ENCODE measurements at regions of chr15 and their contacts with region 1.

Region 1: DNA sequence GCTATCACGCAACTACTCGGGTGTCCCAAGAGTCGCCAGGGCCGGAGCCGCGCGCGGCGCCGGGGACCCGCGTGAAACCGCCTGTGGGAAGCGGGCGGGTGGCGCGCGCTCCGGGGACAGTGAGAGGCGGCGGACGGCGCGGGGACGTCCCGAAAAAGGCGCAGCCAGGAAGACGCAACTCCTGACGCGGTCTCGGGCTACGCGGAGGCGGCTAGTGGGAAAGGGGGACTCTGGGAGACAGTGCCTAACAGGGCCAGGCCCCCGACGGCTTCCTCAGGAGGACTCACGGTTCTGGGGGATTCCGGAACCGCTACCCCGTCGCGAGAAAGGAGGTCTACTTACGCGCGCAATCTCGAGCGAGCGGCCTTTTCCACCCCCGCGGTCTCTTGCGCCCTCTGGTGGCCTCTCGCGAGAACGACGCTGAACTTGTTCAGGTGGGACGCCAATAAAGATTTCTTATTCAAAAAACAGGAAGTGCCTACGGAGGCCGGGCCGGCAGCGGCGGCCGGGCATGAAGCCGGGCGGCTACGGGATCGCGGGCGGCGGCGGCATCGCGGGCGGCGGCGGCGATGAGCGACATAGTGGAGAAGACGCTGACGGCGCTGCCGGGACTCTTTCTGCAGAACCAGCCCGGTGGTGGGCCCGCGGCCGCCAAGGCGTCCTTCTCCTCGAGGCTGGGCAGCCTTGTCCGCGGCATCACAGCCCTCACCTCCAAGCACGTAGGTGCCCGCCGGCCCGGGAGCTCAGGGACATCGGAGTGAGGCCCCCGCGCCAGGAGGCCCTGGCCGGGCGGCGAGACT is at the start of gene AP4E1:
- DNase-seq: peak; percentile 95
- H3K4me3 Mint-ChIP-seq: peak within 1 kb of the TSS; percentile 96
- H3K27ac Mint-ChIP-seq: peak within 1 kb of the TSS; percentile 98
- H3K4me1 Mint-ChIP-seq: peaks cover 28% of the 10 kb centered on the region
- H3K27me3 Mint-ChIP-seq: no peaks in the 10 kb centered on the region
- total RNA-seq, gene AP4E1: 13.3 to 14.5 TPM

Region 2: DNA sequence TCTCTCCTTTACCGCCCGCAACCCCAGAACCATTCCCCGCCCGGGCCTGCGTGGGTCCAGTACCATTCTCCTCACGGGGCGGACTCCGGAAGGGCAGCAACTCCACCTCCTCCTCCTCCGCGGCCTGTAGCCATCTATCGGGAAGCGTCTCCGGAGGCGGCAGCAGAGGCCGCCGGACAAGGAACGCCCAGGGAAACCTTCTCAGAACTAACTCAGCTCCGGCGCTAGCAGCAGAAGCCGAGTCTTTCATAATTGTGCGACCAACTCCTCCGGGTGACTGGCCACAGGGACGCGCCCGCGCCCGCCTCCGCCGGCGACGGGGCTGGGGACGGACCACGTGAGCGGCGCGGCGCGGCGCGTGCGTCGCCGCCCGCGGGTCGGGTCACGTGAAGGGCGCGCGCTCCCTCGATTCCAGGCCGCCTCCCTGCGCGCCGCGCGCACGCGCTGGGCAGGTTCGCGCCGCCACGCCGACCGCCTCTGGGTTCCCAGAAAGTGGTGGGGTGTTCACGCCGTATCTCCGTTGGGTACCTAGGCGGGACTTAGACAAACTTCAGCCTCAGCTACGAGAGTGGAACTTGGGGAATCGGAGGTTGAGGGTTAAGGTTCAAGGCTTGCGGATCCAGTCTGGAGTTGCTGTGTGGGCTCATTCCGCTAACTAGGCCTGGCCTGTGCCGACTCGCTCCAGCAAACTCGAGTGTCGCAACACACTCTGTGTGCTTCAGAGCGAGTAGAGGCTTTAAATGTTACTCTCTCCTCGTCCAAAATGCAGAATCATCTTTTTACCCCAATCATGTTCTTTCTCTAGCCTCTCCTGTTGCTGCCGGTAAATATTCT is 221.7 kb before region 1 on chr15 and contains the start of gene TRPM7:
- CTCF ChIA-PET with region 1: no interaction called
- POLR2A ChIA-PET with region 1: interaction called, 14 read pairs
- DNase-seq: peak; percentile 90
- H3K4me3 Mint-ChIP-seq: peak within 1 kb of the TSS; percentile 99
- H3K27ac Mint-ChIP-seq: peak within 1 kb of the TSS; percentile 97
- H3K4me1 Mint-ChIP-seq: peaks cover 57% of the 10 kb centered on the region
- H3K27me3 Mint-ChIP-seq: no peaks in the 10 kb centered on the region
- total RNA-seq, gene TRPM7: 35.3 to 40.2 TPM

Region 3: DNA sequence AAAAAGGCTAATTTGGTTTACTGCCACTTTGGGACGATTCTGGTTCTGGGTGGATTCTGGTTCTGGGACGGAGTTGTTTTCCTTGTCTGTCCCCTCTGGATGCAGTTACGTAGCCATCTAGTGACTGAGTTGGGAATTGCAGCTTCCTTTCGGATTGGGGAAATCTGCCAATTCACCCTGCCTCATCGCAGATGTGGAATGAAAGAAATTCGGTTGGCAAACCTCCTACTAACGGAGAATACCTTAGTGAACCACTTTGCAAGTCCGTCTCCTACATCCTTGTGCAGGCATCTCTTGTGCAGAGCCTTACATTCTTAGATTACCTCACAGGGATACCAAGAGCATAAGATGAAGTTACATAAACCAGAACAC is 31.4 kb before region 1 on chr15:
- CTCF ChIA-PET with region 1: interaction called, 13 read pairs
- POLR2A ChIA-PET with region 1: interaction called, 24 read pairs
- DNase-seq: peak; percentile 71
- H3K4me3 Mint-ChIP-seq: peak overlapping the region; percentile 58
- H3K27ac Mint-ChIP-seq: peak overlapping the region; percentile 52
- H3K4me1 Mint-ChIP-seq: peaks cover 50% of the 10 kb centered on the region
- H3K27me3 Mint-ChIP-seq: peaks cover 10% of the 10 kb centered on the region

Region 4: GRCh38 chr15:50883903-50884302 is 24.5 kb before region 1 on chr15:
- CTCF ChIA-PET with region 1: interaction called, 13 read pairs
- POLR2A ChIA-PET with region 1: interaction called, 32 read pairs
- DNase-seq: peak; percentile 52
- H3K4me3 Mint-ChIP-seq: no peak overlapping the region
- H3K27ac Mint-ChIP-seq: peak overlapping the region; percentile 91
- H3K4me1 Mint-ChIP-seq: peaks cover 72% of the 10 kb centered on the region
- H3K27me3 Mint-ChIP-seq: no peaks in the 10 kb centered on the region

Region 5: DNA sequence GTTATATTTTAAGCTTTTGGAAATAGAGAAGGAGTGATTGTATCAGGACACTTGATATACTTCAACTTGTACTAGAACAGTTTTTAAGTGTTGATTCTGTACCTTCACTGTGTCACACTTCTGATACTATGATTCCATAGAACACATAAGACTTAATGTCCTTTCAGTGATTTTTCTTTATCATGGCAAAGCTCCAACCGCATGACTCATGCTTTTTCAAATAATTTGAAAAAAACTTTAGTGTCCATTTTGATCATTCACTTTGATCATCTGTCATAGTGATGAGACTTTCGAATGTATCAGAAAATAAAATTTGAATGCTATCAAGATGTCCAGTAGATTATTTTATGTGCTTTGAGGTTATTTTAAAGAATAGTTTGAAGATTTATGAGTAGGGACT is 32.1 kb after region 1 on chr15:
- CTCF ChIA-PET with region 1: no interaction called
- POLR2A ChIA-PET with region 1: no interaction called
- DNase-seq: no peak
- H3K4me3 Mint-ChIP-seq: no peak overlapping the region
- H3K27ac Mint-ChIP-seq: no peak overlapping the region
- H3K4me1 Mint-ChIP-seq: no peaks in the 10 kb centered on the region
- H3K27me3 Mint-ChIP-seq: no peaks in the 10 kb centered on the region

Region 6: DNA sequence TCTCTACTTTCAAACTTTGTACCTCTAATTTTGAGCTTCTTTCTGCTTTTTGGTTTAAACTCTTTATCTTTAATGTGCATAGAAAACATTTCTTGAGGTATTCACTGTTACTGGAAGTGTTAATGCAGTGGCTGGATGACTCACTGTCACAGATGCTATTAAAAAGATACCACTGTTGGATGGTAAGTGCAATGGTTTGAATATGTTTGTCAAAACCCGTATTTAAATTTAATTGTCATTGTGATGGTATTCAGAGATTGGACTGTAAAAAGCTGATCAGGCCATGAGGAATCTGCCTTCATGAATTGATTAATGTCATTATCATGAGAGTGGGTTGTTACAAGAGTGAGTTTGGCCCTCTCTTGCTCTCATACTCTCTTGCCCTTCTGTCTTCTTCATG is 70.6 kb after region 1 on chr15:
- CTCF ChIA-PET with region 1: no interaction called
- POLR2A ChIA-PET with region 1: no interaction called
- DNase-seq: no peak
- H3K4me3 Mint-ChIP-seq: no peak overlapping the region
- H3K27ac Mint-ChIP-seq: no peak overlapping the region
- H3K4me1 Mint-ChIP-seq: peaks cover 5% of the 10 kb centered on the region
- H3K27me3 Mint-ChIP-seq: no peaks in the 10 kb centered on the region

Region 7: DNA sequence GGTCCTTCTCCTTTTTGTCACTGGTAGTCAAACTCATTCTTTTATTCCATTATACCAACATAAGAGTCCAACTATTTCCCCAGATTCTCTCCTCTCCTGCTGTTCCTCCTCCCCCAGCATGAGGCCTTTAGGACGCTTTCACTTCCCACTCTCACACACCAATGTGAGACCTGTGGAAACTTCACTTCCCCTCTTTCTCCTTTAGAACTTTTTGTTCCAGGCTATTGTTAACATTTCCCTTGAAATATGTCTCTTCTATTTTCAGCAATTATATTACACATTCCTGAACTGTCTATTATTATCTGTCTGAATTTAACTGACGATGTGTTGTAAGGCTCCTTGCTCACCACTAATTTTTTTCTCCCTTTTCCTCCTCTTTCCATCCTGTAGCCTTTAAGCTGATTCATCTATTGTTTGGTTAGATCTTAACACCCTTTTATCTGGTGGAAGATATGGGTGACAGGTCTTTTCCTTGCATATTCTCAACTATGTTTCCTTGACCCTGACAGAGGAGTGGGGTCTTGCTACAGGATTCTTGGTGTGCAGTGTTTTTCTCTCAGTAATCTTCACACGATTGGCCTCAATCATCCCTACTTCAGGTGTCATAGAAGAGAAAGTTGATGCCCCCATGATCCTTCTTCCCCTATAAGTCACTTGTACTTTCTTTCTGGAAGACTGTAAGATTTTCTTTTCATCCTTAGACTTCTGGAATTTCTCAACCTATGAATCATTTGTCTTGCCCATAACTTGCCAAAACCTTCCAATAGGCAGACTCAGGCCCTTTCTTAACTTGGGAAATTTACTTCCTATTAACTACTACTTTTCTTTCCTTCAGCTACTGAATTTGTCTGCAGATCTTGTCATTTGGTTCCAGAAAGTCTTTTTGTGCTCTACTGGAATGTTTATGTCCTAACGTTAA is 424.1 kb after region 1 on chr15:
- CTCF ChIA-PET with region 1: no interaction called
- POLR2A ChIA-PET with region 1: no interaction called
- DNase-seq: no peak
- H3K4me3 Mint-ChIP-seq: no peak overlapping the region
- H3K27ac Mint-ChIP-seq: no peak overlapping the region
- H3K4me1 Mint-ChIP-seq: peaks cover 3% of the 10 kb centered on the region
- H3K27me3 Mint-ChIP-seq: peaks cover 6% of the 10 kb centered on the region